K562 (cell line): ENCODE measurements at regions of chr1 and their contacts with region 1.

Region 1: GRCh38 chr1:21334214-21335087 is 44.2 kb upstream of the ECE1 start:
- DNase-seq: peak; percentile 62 to 72 (median 64)
- ATAC-seq: peak; percentile 90
- H3K4me3 ChIP-seq: no peak overlapping the region
- H3K27ac ChIP-seq: no peak overlapping the region
- H3K4me1 ChIP-seq: peaks cover 27 to 32% of the 10 kb centered on the region in 2 experiments
- H3K27me3 ChIP-seq: no peaks in the 10 kb centered on the region; a peak in 1 of 5 replicates
- CTCF ChIP-seq: peak; percentile 85 to 93 (median 91)
- EP300 ChIP-seq: no peak
- POLR2A ChIP-seq: no peak
- RAD21 ChIP-seq: peak; percentile 62 to 83

Region 2: GRCh38 chr1:21295002-21295401 is 39.4 kb before region 1 on chr1:
- CTCF ChIA-PET with region 1: no interaction called
- POLR2A ChIA-PET with region 1: no interaction called
- in situ Hi-C with region 1: no loop called
- intact Hi-C with region 1: loop called (anchors 1 kb)
- DNase-seq: peak in 2 of 4 experiments; percentile 62 to 72
- ATAC-seq: peak; percentile 78
- H3K4me3 ChIP-seq: no peak overlapping the region
- H3K27ac ChIP-seq: no peak overlapping the region
- H3K4me1 ChIP-seq: peaks cover 6 to 14% of the 10 kb centered on the region in 2 experiments; a peak in 3 of 5 replicates
- H3K27me3 ChIP-seq: no peaks in the 10 kb centered on the region; a peak in 2 of 5 replicates
- CTCF ChIP-seq: no peak
- EP300 ChIP-seq: peak; percentile 32; the same call in 1 of the 2 replicates
- POLR2A ChIP-seq: no peak
- RAD21 ChIP-seq: no peak